ENCODE measurements at regions of chr17 and their contacts with region 1.

Region 1: GRCh38 chr17:4420692-4421131 is 13.0 kb upstream of the SPNS3 start:
- DNase-seq: no peak
- H3K4me3 ChIP-seq: no peak overlapping the region
- H3K27me3 ChIP-seq: no peaks in the 10 kb centered on the region
- CTCF ChIP-seq: peak; percentile 86

Region 2: GRCh38 chr17:4394208-4395110 is 26.3 kb before region 1 on chr17:
- CTCF ChIA-PET with region 1: no interaction called
- POLR2A ChIA-PET with region 1: no interaction called
- DNase-seq: no peak
- H3K4me3 ChIP-seq: no peak overlapping the region
- H3K27me3 ChIP-seq: no peaks in the 10 kb centered on the region
- CTCF ChIP-seq: no peak

Region 3: DNA sequence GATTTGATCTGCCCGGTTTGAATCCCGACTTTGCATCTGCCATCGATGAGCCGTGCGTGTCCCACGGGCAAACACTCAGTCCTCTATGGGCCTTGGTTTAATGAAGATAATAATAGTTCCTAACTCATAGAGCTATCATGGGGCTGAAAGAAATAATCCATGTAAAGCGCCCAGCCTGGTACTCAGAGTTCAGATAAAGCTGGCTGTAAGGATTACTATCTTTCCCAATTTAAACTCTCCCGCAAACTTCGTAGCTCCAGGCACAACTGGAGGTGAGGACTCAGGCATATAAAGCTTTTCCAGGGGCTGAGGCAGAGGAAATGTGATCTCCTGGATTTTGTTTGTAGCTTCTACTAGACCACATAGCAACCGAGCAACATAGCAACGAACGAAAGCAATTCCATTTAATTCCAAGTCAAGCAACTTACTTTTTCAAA is 204.5 kb after region 1 on chr17:
- CTCF ChIA-PET with region 1: interaction called, 12 read pairs
- POLR2A ChIA-PET with region 1: no interaction called
- DNase-seq: no peak
- H3K4me3 ChIP-seq: no peak overlapping the region
- H3K27me3 ChIP-seq: peaks cover 12% of the 10 kb centered on the region
- CTCF ChIP-seq: no peak